ENCODE measurements at regions of chr16 and their contacts with region 1.

Region 1: DNA sequence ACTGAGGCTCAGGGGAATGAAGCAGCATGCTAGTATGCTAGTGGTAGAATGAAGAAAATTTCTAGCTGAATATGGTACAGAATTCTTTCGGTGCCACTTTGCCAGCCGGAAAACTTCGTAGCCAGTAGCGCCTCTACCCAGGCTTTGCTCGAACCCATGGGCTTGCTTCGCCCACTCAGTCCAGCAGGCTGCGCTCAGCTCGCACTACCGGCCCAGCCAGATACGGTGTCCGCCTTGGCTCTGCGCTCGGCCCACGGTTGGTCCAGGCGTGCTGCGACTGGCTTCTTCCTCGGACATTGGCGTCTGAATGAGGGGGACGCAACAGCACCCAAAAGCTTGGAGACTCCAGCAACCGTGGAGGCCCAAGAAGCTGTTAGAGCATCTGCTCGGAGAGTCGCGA is 372.5 kb upstream of the CDH8 start:
- DNase-seq: peak; percentile 77
- ATAC-seq: peak; percentile 97
- H3K4me3 Mint-ChIP-seq: no peak overlapping the region
- H3K27ac Mint-ChIP-seq: no peak overlapping the region
- H3K4me1 Mint-ChIP-seq: peaks cover 20% of the 10 kb centered on the region
- H3K27me3 Mint-ChIP-seq: peaks cover 9% of the 10 kb centered on the region; the same call in 1 of the 2 replicates
- CTCF ChIP-seq: no peak

Region 2: DNA sequence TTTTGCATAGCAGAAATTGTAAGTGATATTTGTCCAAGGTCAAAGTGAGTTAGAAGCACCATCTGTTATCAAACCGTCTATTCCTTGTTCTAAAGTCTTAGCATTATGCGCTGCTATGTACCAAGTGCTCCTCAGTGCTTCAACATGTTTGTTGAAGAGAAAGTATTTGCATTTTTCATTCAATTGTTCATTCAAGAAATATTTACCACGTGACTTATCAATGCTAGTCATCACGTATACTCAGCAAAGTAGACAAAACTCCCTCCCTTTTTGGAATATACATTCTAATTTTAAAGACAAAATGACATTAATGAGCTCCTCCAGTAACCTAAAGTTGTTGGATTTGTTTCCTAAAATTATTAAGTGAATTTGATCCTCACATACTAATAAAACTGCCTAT is 15.4 kb after region 1 on chr16:
- CTCF ChIA-PET with region 1: no interaction called
- POLR2A ChIA-PET with region 1: no interaction called
- DNase-seq: no peak
- ATAC-seq: no peak
- H3K4me3 Mint-ChIP-seq: no peak overlapping the region
- H3K27ac Mint-ChIP-seq: no peak overlapping the region
- H3K4me1 Mint-ChIP-seq: peaks cover 3% of the 10 kb centered on the region; the same call in 1 of the 2 replicates
- H3K27me3 Mint-ChIP-seq: no peaks in the 10 kb centered on the region
- CTCF ChIP-seq: no peak

Region 3: GRCh38 chr16:62462971-62463370 is 54.2 kb after region 1 on chr16:
- CTCF ChIA-PET with region 1: no interaction called
- POLR2A ChIA-PET with region 1: interaction called, 12 read pairs
- DNase-seq: no peak
- ATAC-seq: no peak
- H3K4me3 Mint-ChIP-seq: no peak overlapping the region
- H3K27ac Mint-ChIP-seq: no peak overlapping the region
- H3K4me1 Mint-ChIP-seq: no peaks in the 10 kb centered on the region
- H3K27me3 Mint-ChIP-seq: no peaks in the 10 kb centered on the region
- CTCF ChIP-seq: no peak

Region 4: DNA sequence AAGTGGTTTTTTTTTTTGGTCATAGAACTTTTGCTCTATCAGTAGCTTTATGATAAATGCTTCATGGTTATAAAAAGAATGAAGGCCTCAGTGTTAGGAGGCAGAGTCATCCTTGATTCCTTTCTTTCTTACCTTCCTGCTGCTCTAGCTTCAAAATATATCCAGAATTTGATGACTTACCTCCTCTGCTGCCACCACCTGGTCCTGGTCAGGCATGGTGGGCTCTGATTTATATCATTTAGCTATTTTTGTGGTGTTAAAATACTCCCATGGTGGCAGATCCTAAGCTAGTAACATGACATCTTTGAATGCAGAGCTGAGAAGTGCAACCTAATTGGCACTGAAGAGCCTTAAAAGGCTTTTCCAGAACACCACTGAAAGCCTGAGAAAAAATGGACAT is 136.3 kb after region 1 on chr16:
- CTCF ChIA-PET with region 1: interaction called, 24 read pairs
- POLR2A ChIA-PET with region 1: no interaction called
- DNase-seq: peak; percentile 14
- ATAC-seq: peak; percentile 72
- H3K4me3 Mint-ChIP-seq: no peak overlapping the region
- H3K27ac Mint-ChIP-seq: no peak overlapping the region
- H3K4me1 Mint-ChIP-seq: peaks cover 17% of the 10 kb centered on the region
- H3K27me3 Mint-ChIP-seq: no peaks in the 10 kb centered on the region
- CTCF ChIP-seq: no peak